Activated CD4-positive, alpha-beta memory T cell treated with anti-CD3 and anti-CD28 coated beads for 36 hours (primary cell): ENCODE measurements at regions of chr11 and their contacts with region 1.

Region 1: DNA sequence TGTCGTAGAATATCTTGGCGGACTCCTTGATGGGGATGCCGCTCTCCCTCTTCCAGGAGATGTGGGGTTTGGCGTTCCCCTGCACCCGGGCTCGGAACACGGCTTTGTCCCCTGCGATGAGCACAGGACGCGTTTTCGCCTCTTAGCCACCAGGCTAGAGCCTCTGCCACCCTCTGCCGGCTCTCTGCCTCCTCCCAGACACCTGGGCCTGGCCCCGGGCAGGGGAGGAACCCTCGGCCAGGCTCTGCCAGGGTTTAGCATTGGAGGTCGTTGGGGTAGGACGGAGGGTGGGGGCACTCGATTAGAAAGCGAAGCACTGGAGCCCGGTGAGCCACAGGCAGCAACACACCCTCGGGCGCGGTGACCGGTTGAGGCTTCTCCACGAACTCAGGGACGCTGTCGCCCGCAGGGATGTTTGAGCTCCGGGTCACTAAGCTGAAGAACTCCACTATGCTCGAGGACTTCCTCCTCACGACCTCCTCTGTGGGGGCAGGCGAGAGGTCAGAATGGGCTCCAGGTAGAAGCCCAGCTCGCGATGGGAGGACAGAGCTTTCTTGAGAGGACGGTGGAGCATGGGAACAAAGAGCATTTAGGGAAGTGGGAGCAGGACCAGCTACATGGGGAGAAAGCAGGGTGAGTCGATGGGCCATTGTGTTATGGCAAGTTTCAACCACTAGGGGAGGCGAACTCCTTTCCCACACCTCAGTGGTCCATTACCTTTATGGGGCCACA is 4.3 kb downstream of the IGSF22 start:
- DNase-seq: peak; percentile 60
- H3K4me3 Mint-ChIP-seq: peak overlapping the region; percentile 81
- H3K27ac Mint-ChIP-seq: no peak overlapping the region
- H3K4me1 Mint-ChIP-seq: peaks cover 6% of the 10 kb centered on the region
- H3K27me3 Mint-ChIP-seq: no peaks in the 10 kb centered on the region

Region 2: GRCh38 chr11:18540207-18541009 is 181.3 kb before region 1 on chr11:
- CTCF ChIA-PET with region 1: interaction called, 15 read pairs
- POLR2A ChIA-PET with region 1: interaction called, 3 read pairs
- intact Hi-C with region 1: loop called (anchors 5 kb)
- DNase-seq: no peak
- H3K4me3 Mint-ChIP-seq: no peak overlapping the region
- H3K27ac Mint-ChIP-seq: no peak overlapping the region
- H3K4me1 Mint-ChIP-seq: peaks cover 5% of the 10 kb centered on the region
- H3K27me3 Mint-ChIP-seq: no peaks in the 10 kb centered on the region

Region 3: DNA sequence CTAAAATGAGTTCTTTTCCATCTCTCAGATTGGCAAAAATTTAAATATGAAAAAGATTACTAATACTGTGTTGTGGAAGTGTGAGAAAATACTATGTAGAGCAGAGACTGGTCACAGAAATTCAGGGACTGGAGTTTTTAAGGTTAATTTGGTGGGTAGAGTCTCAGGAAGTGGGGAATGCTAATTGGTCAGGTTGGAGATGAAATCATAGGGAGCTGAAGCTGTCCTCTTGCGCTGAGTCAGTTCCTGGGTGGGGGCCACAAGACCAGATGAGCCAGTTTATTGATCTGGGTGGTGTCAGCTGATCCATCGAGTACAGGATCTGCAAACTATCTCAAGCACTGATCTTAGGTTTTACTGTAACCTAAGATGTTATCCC is 52.5 kb before region 1 on chr11:
- CTCF ChIA-PET with region 1: interaction called, 12 read pairs
- POLR2A ChIA-PET with region 1: no interaction called
- intact Hi-C with region 1: loop called (anchors 5 kb)
- DNase-seq: peak; percentile 51
- H3K4me3 Mint-ChIP-seq: peak overlapping the region; percentile 9
- H3K27ac Mint-ChIP-seq: peak overlapping the region; percentile 46
- H3K4me1 Mint-ChIP-seq: peaks cover 54% of the 10 kb centered on the region
- H3K27me3 Mint-ChIP-seq: no peaks in the 10 kb centered on the region

Region 4: GRCh38 chr11:18706330-18707243 is 15.1 kb before region 1 on chr11:
- CTCF ChIA-PET with region 1: interaction called, 29 read pairs
- POLR2A ChIA-PET with region 1: no interaction called
- intact Hi-C with region 1: loop called (anchors 1 kb)
- DNase-seq: peak; percentile 68
- H3K4me3 Mint-ChIP-seq: peak overlapping the region; percentile 71
- H3K27ac Mint-ChIP-seq: no peak overlapping the region
- H3K4me1 Mint-ChIP-seq: peaks cover 23% of the 10 kb centered on the region
- H3K27me3 Mint-ChIP-seq: no peaks in the 10 kb centered on the region

Region 5: GRCh38 chr11:18757811-18758210 is 36.1 kb after region 1 on chr11:
- CTCF ChIA-PET with region 1: interaction called, 18 read pairs
- POLR2A ChIA-PET with region 1: no interaction called
- intact Hi-C with region 1: no loop called
- DNase-seq: no peak
- H3K4me3 Mint-ChIP-seq: no peak overlapping the region
- H3K27ac Mint-ChIP-seq: no peak overlapping the region
- H3K4me1 Mint-ChIP-seq: no peaks in the 10 kb centered on the region
- H3K27me3 Mint-ChIP-seq: no peaks in the 10 kb centered on the region

Region 6: DNA sequence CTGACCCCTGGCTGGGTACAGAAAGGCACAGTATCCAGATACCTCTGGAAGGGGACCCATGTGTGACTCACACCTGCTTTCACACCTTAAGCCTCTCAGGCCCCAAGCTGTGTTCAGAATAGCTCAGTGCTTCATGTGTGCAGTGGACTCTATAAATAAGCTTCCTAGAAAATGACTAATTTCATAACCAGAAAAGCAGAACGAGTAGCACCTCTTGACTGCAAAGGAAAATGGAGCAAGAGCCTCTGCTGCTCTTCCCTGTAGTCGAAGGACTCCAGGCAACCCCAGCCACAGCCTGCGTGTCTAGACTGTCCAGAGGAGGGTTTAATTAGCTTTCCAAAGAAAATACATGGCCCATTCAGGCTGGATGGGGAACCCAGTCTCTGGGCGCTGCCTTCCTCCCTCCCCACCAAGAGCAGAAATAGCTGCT is 46.8 kb after region 1 on chr11:
- CTCF ChIA-PET with region 1: interaction called, 18 read pairs
- POLR2A ChIA-PET with region 1: no interaction called
- intact Hi-C with region 1: loop called (anchors 1 kb)
- DNase-seq: peak; percentile 42
- H3K4me3 Mint-ChIP-seq: no peak overlapping the region
- H3K27ac Mint-ChIP-seq: peak overlapping the region; percentile 9
- H3K4me1 Mint-ChIP-seq: peaks cover 20% of the 10 kb centered on the region
- H3K27me3 Mint-ChIP-seq: peaks cover 12% of the 10 kb centered on the region